Activated T-helper 1 cell treated with anti-CD3 and anti-CD28 coated beads, Interleukin-12 subunit alpha, Interleukin-12 subunit beta, Interleukin-2, Interleukin-4 antibody, amounts not matched to agents 30 ng/mL and 10 ng/mL and 1 ng/mL, durations not matched to agents 14 hours and 24 hours and 36 hours (primary cell): ENCODE measurements at regions of chr19 and their contacts with region 1.

Region 1: DNA sequence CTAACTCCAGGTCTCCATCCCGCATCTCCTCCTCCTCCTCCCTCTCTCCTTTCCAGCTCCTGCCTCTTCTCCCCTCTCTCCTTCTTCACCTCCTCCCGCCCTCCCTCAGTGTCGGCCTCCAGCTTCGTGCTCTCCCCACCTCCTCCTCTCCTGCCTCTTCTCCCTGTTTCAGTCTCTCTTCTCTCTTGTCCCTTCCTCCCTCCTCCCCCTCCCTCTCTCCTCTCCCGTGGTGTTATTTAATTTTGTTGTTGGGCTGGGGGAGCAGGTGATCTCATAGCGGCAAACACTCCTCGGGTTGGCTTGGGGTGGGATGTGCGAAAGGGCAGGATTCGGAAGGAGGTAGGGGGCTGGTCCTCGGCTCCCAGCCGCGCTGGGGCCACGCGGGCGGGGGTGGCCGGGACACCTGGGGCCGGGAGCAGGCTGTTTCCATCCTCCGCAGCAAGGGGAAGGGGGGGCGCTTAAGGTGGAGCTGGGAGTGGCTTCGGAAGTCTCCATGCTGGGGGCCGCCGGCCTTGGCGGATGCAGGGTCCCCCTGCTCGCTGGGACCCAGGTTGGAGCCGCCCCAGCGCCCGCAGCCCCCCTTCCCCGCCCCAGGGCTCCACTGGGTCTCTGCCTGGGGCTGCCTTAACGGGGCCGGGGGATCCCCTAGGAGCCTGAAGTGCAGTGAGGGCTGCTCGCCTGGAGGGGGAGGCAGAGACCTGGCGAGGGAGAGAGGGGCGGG is at the start of gene CA11:
- DNase-seq: peak; percentile 88
- H3K4me3 Mint-ChIP-seq: peak within 1 kb of the TSS; percentile 87
- H3K27ac Mint-ChIP-seq: peak within 1 kb of the TSS; percentile 88
- H3K4me1 Mint-ChIP-seq: peaks cover 22% of the 10 kb centered on the region
- H3K27me3 Mint-ChIP-seq: peaks cover 6% of the 10 kb centered on the region
- total RNA-seq, gene CA11: 13.0 and 13.9 TPM in 2 replicates

Region 2: GRCh38 chr19:48558018-48558684 is 88.0 kb before region 1 on chr19:
- intact Hi-C with region 1: no loop called
- DNase-seq: no peak
- H3K4me3 Mint-ChIP-seq: no peak overlapping the region
- H3K27ac Mint-ChIP-seq: no peak overlapping the region
- H3K4me1 Mint-ChIP-seq: no peaks in the 10 kb centered on the region
- H3K27me3 Mint-ChIP-seq: peaks cover 2% of the 10 kb centered on the region

Region 3: DNA sequence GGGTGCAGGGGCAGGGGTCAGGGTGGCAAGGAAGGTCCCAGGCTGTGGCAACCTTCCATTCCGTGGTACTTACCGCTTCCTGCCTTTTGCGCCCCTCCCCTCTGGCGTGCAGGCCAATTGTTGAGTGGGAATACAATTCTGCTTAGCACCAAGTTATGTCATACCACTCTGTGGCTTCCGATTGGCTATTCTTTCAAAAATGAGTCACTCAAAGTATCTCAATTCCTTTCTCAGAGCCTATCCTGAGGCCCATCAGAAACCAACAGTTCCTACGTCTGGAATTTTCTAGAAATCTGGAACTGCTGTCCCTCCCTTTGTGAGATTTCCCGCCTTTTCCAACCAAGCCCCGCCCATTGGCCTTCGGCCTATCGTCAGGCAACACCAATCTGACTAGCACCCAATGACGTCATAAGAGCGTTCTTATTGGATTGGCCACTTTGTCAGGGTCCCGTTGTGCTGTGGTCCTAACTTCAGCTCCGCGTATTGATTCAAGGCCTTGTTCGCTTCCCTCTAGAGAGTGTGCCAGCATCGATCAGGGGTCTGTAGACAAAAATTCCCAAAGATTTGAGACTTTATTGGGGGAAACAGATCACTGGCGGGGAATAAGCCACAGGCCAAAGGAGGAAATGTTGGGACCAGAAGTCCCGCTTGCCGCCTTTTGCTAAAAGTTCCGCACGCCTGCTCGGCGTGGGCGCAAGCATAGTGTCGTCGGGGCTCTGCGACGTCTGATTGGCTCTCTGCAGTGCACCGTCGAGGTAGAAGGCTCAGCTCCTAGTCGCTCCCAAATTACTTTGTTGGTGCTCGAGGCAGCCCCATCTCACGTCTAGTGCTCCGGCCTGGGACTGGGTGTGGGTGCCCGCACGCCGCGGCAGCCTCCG is 14.9 kb after region 1 on chr19:
- intact Hi-C with region 1: loop called (anchors 1 kb)
- DNase-seq: peak; percentile 77
- H3K4me3 Mint-ChIP-seq: peak overlapping the region; percentile 54
- H3K27ac Mint-ChIP-seq: peak overlapping the region; percentile 91
- H3K4me1 Mint-ChIP-seq: peaks cover 9% of the 10 kb centered on the region
- H3K27me3 Mint-ChIP-seq: peaks cover 5% of the 10 kb centered on the region

Region 4: DNA sequence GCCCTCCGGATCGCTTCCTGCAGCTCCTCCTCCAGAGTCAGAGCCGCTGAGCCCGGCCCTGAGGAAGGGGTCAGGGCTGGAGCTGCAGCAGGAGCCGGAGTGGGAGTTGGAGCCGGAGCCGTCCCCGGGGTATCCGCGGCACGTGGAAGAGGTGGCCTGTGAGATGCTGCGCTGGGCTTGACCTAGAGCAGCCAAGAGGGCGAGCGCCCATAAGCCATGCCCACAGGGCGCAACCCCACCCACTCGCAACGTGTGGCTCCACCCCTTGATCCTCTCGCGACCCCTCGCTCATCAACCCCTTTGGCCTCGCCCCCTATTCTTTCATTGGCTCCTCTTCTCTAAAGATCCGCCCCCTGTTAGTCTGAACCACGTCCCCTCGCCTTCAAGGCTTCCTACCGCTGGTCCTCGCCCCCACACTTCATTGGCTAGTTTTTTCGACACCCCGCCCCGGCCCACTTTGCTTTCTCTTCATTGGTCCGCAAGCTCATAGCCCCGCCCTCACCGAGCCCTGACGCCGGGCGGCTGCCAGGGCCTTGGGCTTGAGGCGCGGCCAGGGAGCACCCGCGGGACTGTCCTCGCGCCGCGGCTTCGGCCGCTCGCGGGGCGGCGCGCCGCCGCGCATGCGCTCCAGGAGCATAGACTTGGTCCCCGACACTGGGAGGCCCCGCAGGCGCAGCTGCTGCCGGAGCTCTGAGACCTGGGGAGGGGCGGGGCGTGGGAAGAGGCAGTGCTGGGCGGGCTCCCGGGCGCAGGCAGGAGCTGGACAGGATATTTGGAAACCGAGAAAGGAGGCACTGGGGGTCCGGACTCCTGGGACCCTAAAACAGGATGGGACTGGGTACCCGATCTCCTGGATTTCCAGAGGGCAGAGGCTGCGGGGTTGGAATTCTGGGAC is 68.0 kb after region 1 on chr19:
- intact Hi-C with region 1: loop called (anchors 2 kb)
- DNase-seq: peak; percentile 98
- H3K4me3 Mint-ChIP-seq: peak overlapping the region; percentile 80
- H3K27ac Mint-ChIP-seq: peak overlapping the region; percentile 83
- H3K4me1 Mint-ChIP-seq: peaks cover 8% of the 10 kb centered on the region
- H3K27me3 Mint-ChIP-seq: peaks cover 1% of the 10 kb centered on the region

Region 5: GRCh38 chr19:48738557-48739399 is 92.6 kb after region 1 on chr19:
- intact Hi-C with region 1: loop called (anchors 1 kb)
- DNase-seq: peak; percentile 85
- H3K4me3 Mint-ChIP-seq: peak overlapping the region; percentile 64
- H3K27ac Mint-ChIP-seq: peak overlapping the region; percentile 52
- H3K4me1 Mint-ChIP-seq: peaks cover 13% of the 10 kb centered on the region
- H3K27me3 Mint-ChIP-seq: no peaks in the 10 kb centered on the region

Region 6: GRCh38 chr19:48835734-48836088 is 189.6 kb after region 1 on chr19:
- intact Hi-C with region 1: loop called (anchors 1 kb)
- DNase-seq: peak; percentile 87
- H3K4me3 Mint-ChIP-seq: peak overlapping the region; percentile 84
- H3K27ac Mint-ChIP-seq: peak overlapping the region; percentile 87
- H3K4me1 Mint-ChIP-seq: peaks cover 23% of the 10 kb centered on the region
- H3K27me3 Mint-ChIP-seq: peaks cover 7% of the 10 kb centered on the region

Region 7: GRCh38 chr19:48965040-48965805 is 319.1 kb after region 1 on chr19 and contains the start of gene FTL:
- intact Hi-C with region 1: loop called (anchors 5 kb)
- DNase-seq: peak; percentile 91
- H3K4me3 Mint-ChIP-seq: peak within 1 kb of the TSS; percentile 95
- H3K27ac Mint-ChIP-seq: peak within 1 kb of the TSS; percentile 96
- H3K4me1 Mint-ChIP-seq: peaks cover 58% of the 10 kb centered on the region
- H3K27me3 Mint-ChIP-seq: no peaks in the 10 kb centered on the region
- total RNA-seq, gene FTL: 651 and 662 TPM in 2 replicates